ENCODE measurements at regions of chr13 and their contacts with region 1.

Region 1: DNA sequence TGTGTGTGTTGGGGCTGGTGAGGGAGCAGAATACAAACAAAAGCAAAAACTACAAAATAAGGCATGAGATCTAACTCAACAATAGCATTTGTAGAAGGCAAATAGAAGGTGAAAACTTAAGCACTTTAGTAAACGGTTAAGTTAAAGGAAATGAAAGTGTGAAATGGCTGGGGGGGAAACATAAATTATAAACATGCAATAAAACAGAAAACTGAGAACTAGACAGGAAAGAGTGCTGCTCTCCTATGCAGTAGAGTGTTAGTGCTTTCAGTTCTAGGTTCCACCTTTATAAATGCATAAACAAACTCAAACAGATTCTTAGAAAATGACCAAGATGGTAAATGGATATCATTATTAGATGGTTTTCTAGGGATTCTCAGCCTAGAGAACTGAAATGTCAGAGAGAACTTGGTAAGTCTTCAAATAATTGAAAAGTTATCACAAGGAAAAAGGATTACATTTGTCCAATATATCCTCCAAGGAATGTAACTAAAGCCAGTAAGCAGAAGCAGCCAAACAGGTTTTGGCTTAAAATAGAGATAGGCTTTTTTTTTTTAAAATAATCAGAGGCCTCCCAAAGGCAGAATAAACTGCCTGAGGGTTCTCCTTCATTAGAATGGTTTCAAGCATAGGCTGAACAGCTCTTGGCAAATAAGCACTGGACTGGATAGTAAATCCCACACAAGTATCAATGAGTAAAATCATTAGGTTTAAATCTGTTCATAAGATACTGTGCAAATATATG is 23.3 kb downstream of the RBM26 start:
- DNase-seq: peak in 1 of 14 experiments; percentile 41
- ATAC-seq: peak; percentile 43
- H3K4me3 ChIP-seq: no peak overlapping the region
- H3K4me3 Mint-ChIP-seq: peak overlapping the region; percentile 71
- H3K27ac ChIP-seq: no peak overlapping the region
- H3K27ac Mint-ChIP-seq: peak overlapping the region; percentile 46
- H3K4me1 ChIP-seq: peaks cover 7% of the 10 kb centered on the region
- H3K4me1 Mint-ChIP-seq: peaks cover 70% of the 10 kb centered on the region
- H3K27me3 ChIP-seq: no peaks in the 10 kb centered on the region
- H3K27me3 Mint-ChIP-seq: no peaks in the 10 kb centered on the region
- CTCF ChIP-seq: no peak

Region 2: GRCh38 chr13:79336966-79337365 is 45.8 kb before region 1 on chr13:
- CTCF ChIA-PET with region 1: no interaction called
- POLR2A ChIA-PET with region 1: no interaction called
- intact Hi-C with region 1: loop called in 1 of 2 experiments (anchors 5 kb)
- DNase-seq: no peak
- ATAC-seq: no peak
- H3K4me3 ChIP-seq: no peak overlapping the region
- H3K4me3 Mint-ChIP-seq: no peak overlapping the region
- H3K27ac ChIP-seq: no peak overlapping the region
- H3K27ac Mint-ChIP-seq: no peak overlapping the region
- H3K4me1 ChIP-seq: no peaks in the 10 kb centered on the region
- H3K4me1 Mint-ChIP-seq: no peaks in the 10 kb centered on the region
- H3K27me3 ChIP-seq: no peaks in the 10 kb centered on the region
- H3K27me3 Mint-ChIP-seq: no peaks in the 10 kb centered on the region
- CTCF ChIP-seq: no peak

Region 3: GRCh38 chr13:79365981-79366380 is 16.7 kb before region 1 on chr13:
- CTCF ChIA-PET with region 1: no interaction called
- POLR2A ChIA-PET with region 1: interaction called, 3 read pairs
- intact Hi-C with region 1: loop called in 1 of 2 experiments (anchors 2 kb)
- DNase-seq: no peak
- ATAC-seq: no peak
- H3K4me3 ChIP-seq: no peak overlapping the region
- H3K4me3 Mint-ChIP-seq: no peak overlapping the region
- H3K27ac ChIP-seq: no peak overlapping the region
- H3K27ac Mint-ChIP-seq: no peak overlapping the region
- H3K4me1 ChIP-seq: no peaks in the 10 kb centered on the region
- H3K4me1 Mint-ChIP-seq: peaks cover 16% of the 10 kb centered on the region
- H3K27me3 ChIP-seq: no peaks in the 10 kb centered on the region
- H3K27me3 Mint-ChIP-seq: no peaks in the 10 kb centered on the region
- CTCF ChIP-seq: no peak

Region 4: DNA sequence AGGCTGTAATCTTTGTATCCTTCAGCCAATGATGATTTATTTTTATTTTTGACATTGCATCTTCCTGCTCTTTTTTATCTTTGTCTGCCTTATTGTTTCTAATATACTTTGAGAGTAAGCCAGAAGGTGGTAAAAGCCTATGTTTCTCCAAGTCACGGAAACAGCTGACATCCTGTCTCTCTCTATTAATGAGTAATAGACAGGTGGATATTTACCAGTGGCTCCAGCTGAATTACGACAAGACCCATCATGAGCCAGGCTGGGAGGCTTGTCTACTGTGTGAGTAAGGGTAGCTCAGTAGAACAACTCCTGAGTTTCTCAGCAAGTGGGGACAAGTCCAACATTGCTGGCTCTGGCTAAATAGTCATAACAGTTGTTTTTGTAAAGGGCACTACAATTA is 264.8 kb after region 1 on chr13:
- CTCF ChIA-PET with region 1: no interaction called
- POLR2A ChIA-PET with region 1: no interaction called
- intact Hi-C with region 1: no loop called
- DNase-seq: no peak
- ATAC-seq: no peak
- H3K4me3 ChIP-seq: no peak overlapping the region
- H3K4me3 Mint-ChIP-seq: no peak overlapping the region
- H3K27ac ChIP-seq: no peak overlapping the region
- H3K27ac Mint-ChIP-seq: no peak overlapping the region
- H3K4me1 ChIP-seq: no peaks in the 10 kb centered on the region
- H3K4me1 Mint-ChIP-seq: no peaks in the 10 kb centered on the region
- H3K27me3 ChIP-seq: no peaks in the 10 kb centered on the region
- H3K27me3 Mint-ChIP-seq: peaks cover 31% of the 10 kb centered on the region
- CTCF ChIP-seq: no peak

Region 5: DNA sequence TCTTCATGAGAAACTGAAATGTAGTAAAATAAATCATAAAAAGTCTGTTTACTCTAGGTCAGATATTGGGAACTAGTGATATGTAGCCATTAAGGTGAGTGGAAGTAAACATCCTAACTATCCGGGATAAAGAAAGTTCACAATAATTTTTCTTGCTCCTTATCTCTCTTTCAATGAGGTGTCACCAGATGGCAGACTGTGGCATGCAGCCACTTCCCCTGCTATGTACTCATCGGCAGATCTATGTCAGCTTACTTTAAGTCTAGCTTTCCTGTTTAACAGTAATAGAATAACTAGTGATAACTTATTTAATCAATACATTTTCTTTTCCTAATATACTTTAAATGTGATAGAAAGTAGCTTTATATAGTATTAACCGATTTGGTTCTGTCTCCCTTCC is 280.2 kb after region 1 on chr13:
- CTCF ChIA-PET with region 1: no interaction called
- POLR2A ChIA-PET with region 1: no interaction called
- intact Hi-C with region 1: no loop called
- DNase-seq: no peak
- ATAC-seq: no peak
- H3K4me3 ChIP-seq: no peak overlapping the region
- H3K4me3 Mint-ChIP-seq: no peak overlapping the region
- H3K27ac ChIP-seq: no peak overlapping the region
- H3K27ac Mint-ChIP-seq: no peak overlapping the region
- H3K4me1 ChIP-seq: no peaks in the 10 kb centered on the region
- H3K4me1 Mint-ChIP-seq: no peaks in the 10 kb centered on the region
- H3K27me3 ChIP-seq: peaks cover 0 to 9% of the 10 kb centered on the region in 2 experiments
- H3K27me3 Mint-ChIP-seq: peaks cover 28% of the 10 kb centered on the region
- CTCF ChIP-seq: no peak